ENCODE measurements at regions of chr6 and their contacts with region 1.

Region 1: DNA sequence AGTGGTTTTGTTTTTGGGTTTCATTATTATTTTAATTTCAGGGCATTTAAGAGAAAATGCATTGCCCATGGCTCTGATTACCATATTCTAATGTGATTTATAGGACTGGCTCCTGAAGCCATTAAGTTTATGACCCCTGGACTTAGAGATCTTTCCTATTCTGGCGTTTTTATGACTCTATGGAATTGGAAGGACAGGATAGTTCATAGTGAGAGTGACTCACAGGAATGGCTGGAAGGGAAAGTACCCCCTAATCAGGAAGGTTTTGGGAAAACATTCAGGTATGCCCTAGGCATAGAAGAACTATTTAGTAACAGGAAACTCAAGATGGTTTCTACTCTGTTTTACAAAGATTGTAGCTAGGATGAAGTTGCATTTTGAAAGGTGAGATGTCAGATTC is 108.6 kb upstream of the SLC2A12 start:
- DNase-seq: no peak
- H3K4me3 ChIP-seq: no peak overlapping the region
- H3K27ac ChIP-seq: no peak overlapping the region
- H3K4me1 ChIP-seq: no peaks in the 10 kb centered on the region
- H3K27me3 ChIP-seq: no peaks in the 10 kb centered on the region
- CTCF ChIP-seq: no peak

Region 2: DNA sequence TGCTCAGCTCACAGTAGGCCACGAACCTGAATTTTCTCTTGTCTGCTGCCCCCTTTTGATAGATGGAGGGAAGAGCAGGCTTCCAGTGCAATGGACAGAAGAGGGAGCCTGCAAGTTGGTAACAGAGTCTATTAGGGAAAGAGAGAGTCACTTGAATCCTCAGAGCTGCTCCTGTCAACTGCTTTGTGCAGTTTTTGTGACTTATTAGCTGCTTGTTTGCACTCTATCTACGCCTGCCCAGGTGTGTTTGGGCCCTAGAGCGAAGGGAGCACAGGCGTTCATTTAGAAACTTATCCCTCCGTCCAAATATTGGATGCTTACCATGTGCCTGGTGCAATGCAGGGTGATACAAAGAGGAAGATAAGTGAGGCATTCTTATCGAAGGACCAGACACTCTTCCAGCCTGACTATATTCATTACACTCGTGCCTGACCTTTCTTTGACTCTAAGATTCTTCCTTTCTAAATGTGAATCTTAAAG is 97.0 kb before region 1 on chr6:
- intact Hi-C with region 1: no loop called
- DNase-seq: peak; percentile 70 to 82
- H3K4me3 ChIP-seq: no peak overlapping the region
- H3K27ac ChIP-seq: peak overlapping the region; percentile 53 to 66
- H3K4me1 ChIP-seq: peaks cover 0 to 34% (median 13%) of the 10 kb centered on the region in 4 donors
- H3K27me3 ChIP-seq: no peaks in the 10 kb centered on the region
- CTCF ChIP-seq: peak; percentile 86 to 89

Region 3: DNA sequence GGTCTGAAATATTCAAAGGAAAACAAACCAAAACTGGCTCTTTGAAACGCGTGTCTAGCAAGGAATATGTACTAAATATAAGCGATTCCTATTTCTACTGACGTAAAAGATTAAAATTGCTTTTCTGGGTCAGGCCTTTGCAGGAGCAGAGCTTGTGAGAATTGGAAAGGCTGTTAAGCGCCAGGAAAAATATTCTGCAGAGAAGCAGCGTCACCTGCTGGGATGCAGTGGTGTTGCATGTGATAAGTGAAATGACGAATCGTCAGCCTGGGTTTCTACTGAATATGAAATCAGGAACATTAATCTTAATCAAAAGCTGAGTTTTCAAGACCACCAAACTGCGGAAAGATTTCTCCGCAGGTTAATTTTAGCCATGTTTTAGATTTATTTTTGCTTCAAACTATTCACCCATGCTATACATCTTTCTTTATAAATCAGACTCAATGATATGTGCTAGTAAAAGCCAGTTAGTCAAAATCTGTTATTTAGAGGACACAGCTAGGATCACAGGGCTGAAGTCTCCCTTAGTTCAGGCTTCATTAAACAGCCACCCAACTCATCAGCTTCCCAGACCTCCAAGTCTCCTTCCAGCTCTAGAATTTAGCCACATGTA is 721.5 kb after region 1 on chr6:
- intact Hi-C with region 1: loop called (anchors 5 kb)
- DNase-seq: peak; percentile 66 to 77
- H3K4me3 ChIP-seq: no peak overlapping the region
- H3K27ac ChIP-seq: no peak overlapping the region
- H3K4me1 ChIP-seq: peaks cover 0 to 7% (median 0%) of the 10 kb centered on the region in 4 donors
- H3K27me3 ChIP-seq: no peaks in the 10 kb centered on the region
- CTCF ChIP-seq: peak; percentile 95 to 96

Region 4: DNA sequence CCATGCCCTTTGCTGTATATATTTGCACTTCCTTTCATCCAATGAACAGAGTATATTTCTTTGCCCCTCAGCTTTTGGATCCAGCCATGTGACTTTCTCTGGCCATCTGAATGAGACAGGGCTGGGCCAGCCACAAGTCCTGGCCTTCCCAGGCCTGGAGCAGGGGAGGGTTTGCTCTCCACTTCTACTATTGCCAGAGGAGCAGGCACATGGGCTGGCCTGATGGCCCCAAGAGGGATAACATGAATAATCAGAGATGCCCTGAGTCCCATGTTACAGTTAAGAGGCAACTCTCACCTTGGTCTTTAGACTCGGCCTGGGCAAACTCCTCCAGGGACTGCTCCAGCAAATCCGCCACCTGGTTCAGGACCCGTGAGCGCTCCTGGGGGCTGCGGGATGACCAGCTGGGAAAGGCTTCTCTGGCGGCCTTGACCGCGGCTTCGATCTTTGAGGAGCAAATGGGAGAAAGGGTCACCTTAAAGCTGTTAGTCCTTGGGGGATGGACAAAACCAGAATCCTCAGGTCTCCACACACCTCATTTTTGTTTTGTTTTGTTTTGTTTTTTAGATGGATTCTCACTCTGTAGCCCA is 782.6 kb after region 1 on chr6:
- intact Hi-C with region 1: loop called (anchors 5 kb)
- DNase-seq: no peak
- H3K4me3 ChIP-seq: no peak overlapping the region
- H3K27ac ChIP-seq: no peak overlapping the region
- H3K4me1 ChIP-seq: no peaks in the 10 kb centered on the region
- H3K27me3 ChIP-seq: no peaks in the 10 kb centered on the region
- CTCF ChIP-seq: no peak